ENCODE measurements at regions of chr17 and their contacts with region 1.

Region 1: DNA sequence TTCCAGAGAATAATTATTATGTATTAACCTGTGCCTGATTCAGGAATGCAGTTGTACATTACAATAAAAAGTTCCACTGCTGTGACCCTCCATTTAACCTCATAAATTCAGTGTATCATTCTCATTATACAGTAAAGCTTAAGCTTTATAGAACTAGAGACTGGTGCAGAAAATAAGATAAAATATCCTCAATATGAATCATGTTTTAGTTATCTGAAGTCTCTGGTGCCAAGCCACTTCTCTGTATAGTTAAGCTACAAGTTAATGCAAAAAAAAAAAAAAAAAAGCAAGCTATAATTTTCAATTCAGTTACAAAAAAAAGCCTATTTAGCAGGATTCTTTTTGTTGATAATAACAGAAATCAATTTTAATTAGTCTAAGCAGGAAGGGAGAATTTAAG is 22.4 kb upstream of the SMIM36 start:
- DNase-seq: no peak
- H3K4me3 ChIP-seq: no peak overlapping the region
- H3K27ac ChIP-seq: no peak overlapping the region
- H3K4me1 ChIP-seq: no peaks in the 10 kb centered on the region
- H3K27me3 ChIP-seq: no peaks in the 10 kb centered on the region
- CTCF ChIP-seq: no peak
- EP300 ChIP-seq: no peak
- POLR2A ChIP-seq: no peak

Region 2: GRCh38 chr17:55625521-55625920 is 91.9 kb after region 1 on chr17:
- intact Hi-C with region 1: loop called in 1 of 4 experiments (anchors 10 kb)
- DNase-seq: no peak
- H3K4me3 ChIP-seq: no peak overlapping the region
- H3K27ac ChIP-seq: peak overlapping the region in 1 of 2 donors; percentile 20
- H3K4me1 ChIP-seq: peaks cover 7% of the 10 kb centered on the region
- H3K27me3 ChIP-seq: no peaks in the 10 kb centered on the region
- CTCF ChIP-seq: no peak
- EP300 ChIP-seq: no peak
- POLR2A ChIP-seq: no peak

Region 3: GRCh38 chr17:55717898-55718735 is 184.5 kb after region 1 on chr17:
- intact Hi-C with region 1: loop called in 3 of 4 experiments (anchors 5 kb)
- DNase-seq: peak; percentile 74 to 89 (median 83)
- H3K4me3 ChIP-seq: no peak overlapping the region
- H3K27ac ChIP-seq: no peak overlapping the region
- H3K4me1 ChIP-seq: no peaks in the 10 kb centered on the region
- H3K27me3 ChIP-seq: no peaks in the 10 kb centered on the region
- CTCF ChIP-seq: peak; percentile 66 to 74 (median 69)
- EP300 ChIP-seq: no peak
- POLR2A ChIP-seq: no peak